ENCODE measurements at regions of chrX and their contacts with region 1.

Region 1: DNA sequence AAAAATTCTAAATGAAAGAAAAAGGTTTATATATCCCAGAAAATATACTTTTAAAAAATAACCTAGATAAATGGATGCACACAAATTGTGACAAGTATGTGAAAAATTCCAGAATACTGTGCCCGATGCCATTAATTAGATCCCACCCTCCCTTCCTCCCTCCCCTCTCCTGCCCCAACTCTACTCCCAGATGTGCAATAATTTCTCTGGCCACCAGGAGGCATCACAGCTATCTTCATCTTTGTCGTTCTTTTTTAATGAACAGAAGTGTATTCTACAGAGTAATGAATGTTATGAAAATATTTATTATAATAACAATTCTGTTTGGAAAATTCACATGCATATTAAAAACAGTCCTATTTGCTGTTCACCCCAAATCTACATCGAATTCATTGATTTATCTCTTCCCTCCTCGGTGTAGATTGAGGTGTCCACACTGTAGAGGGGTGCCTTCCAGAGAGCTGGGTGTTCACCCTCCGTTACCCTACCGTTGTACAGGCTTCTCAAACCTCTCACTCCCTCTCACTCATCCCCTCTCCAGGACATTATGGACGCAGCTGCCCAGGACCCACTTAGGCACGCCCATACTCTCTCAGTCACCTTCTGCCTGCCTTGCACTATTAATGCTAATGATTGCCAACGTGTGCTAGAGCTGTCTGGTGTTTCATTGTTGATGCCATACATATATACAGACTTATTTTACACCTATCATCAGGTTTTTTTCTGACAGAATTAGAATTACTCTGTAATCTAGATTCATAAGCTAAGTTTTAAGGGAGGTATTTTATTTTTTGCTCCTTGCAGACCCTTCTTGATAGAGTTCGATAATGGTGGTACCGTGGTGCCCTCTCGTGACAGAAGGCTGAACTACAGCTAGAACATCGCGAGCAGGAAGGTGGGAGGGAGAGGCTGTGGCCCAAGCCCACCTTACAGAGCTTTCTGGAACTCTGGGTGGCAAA is 14.1 kb downstream of the RAB40AL start:
- DNase-seq: peak; percentile 93

Region 2: GRCh38 chrX:103157496-103158320 is 206.5 kb after region 1 on chrX:
- in situ Hi-C with region 1: loop called (anchors 25 kb)
- DNase-seq: peak; percentile 74

Measured in KBM-7 (cell line).